Activated CD4-positive, alpha-beta T cell treated with anti-CD3 and anti-CD28 coated beads for 36 hours (primary cell): ENCODE measurements at regions of chr2 and their contacts with region 1.

Region 1: GRCh38 chr2:2127467-2127866 is 203.6 kb downstream of the MYT1L start:
- DNase-seq: no peak
- ATAC-seq: no peak
- H3K4me3 Mint-ChIP-seq: no peak overlapping the region
- H3K27ac Mint-ChIP-seq: no peak overlapping the region
- H3K4me1 Mint-ChIP-seq: no peaks in the 10 kb centered on the region
- H3K27me3 Mint-ChIP-seq: peaks cover 4% of the 10 kb centered on the region

Region 2: DNA sequence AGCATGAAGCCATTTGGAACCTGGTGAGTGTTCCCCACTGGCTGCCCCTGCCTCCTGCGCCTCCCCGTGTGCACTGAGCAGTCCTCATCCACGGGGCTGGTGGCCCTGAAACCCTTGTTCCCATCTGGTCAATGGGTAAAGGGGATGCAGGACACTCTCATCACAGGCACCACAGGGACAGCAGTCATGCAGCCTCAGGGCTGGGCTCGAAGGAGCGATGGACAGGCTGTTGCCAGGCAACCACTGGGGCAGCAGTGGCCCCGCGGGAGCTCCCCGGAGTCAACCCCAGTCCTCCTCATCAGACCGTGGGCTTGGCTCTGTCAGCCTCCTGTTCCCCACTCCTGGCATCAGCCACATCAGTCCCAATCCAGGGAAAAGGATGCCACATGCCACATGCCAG is 740.6 kb after region 1 on chr2:
- CTCF ChIA-PET with region 1: no interaction called
- POLR2A ChIA-PET with region 1: no interaction called
- intact Hi-C with region 1: loop called in 1 of 2 experiments (anchors 10 kb)
- DNase-seq: no peak
- ATAC-seq: no peak
- H3K4me3 Mint-ChIP-seq: no peak overlapping the region
- H3K27ac Mint-ChIP-seq: no peak overlapping the region
- H3K4me1 Mint-ChIP-seq: peaks cover 2% of the 10 kb centered on the region
- H3K27me3 Mint-ChIP-seq: no peaks in the 10 kb centered on the region